GM12878 (cell line): ENCODE measurements at regions of chr12 and their contacts with region 1.

Region 1: GRCh38 chr12:56127888-56128669 is at the start of gene ESYT1:
- DNase-seq: peak; percentile 98
- ATAC-seq: peak; percentile 93
- H3K4me3 ChIP-seq: peak within 1 kb of the TSS; percentile 93
- H3K27ac ChIP-seq: peak within 1 kb of the TSS; percentile 72
- H3K4me1 ChIP-seq: peaks cover 24% of the 10 kb centered on the region
- H3K27me3 ChIP-seq: no peaks in the 10 kb centered on the region
- CTCF ChIP-seq: no peak
- EP300 ChIP-seq: peak in 1 of 2 experiments; percentile 17; a peak in 1 of 4 replicates
- POLR2A ChIP-seq: peak; percentile 87
- RAD21 ChIP-seq: no peak
- polyA plus RNA-seq, gene ESYT1: 55.6 to 57.9 TPM

Region 2: DNA sequence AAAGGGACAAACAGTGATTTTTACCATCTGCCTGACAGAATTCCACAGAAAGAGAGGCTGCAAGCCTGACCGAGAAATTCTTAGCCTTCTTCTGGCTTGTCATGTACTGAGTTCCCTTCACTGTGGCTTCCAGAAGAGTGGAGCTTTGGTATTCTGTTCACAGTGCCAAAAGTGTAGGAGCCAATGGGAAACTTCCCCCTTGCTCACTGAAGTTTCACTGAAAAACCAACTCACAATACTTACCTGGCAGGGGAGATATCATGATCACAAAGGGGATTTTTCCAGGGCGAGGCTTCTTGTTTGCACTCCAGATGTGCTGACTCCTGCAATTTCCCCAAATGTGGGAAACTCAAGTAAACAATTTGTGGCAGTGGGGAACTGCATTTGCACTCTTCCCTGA is 253.6 kb before region 1 on chr12:
- CTCF ChIA-PET with region 1: no interaction called
- POLR2A ChIA-PET with region 1: no interaction called
- RAD21 ChIA-PET with region 1: no interaction called
- SMC1A ChIA-PET with region 1: no interaction called
- in situ Hi-C with region 1: no loop called
- intact Hi-C with region 1: no loop called
- DNase-seq: no peak
- ATAC-seq: no peak
- H3K4me3 ChIP-seq: no peak overlapping the region
- H3K27ac ChIP-seq: no peak overlapping the region
- H3K4me1 ChIP-seq: no peaks in the 10 kb centered on the region
- H3K27me3 ChIP-seq: no peaks in the 10 kb centered on the region
- CTCF ChIP-seq: no peak
- EP300 ChIP-seq: no peak
- POLR2A ChIP-seq: no peak
- RAD21 ChIP-seq: no peak

Region 3: DNA sequence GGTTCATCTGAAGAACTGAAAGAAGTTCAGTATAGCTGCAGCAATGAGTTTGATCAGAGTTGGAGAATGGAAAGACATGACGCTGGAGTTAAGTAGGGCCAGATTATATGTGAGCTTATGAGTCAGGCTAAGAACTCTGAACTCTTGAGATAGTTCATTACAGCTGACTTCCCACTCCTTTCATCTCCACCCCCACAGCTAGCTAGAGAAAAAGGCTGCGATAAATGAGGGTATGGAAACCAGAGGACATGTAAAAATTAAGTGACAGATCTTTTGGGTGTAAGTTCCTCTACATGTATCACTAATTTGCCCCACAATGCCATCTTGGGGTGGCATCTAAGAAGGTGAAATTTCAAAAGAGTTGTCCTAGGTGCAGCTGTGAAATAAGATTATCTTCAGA is 229.0 kb before region 1 on chr12:
- CTCF ChIA-PET with region 1: no interaction called
- POLR2A ChIA-PET with region 1: no interaction called
- RAD21 ChIA-PET with region 1: no interaction called
- SMC1A ChIA-PET with region 1: no interaction called
- in situ Hi-C with region 1: no loop called
- intact Hi-C with region 1: no loop called
- DNase-seq: no peak
- ATAC-seq: no peak
- H3K4me3 ChIP-seq: no peak overlapping the region
- H3K27ac ChIP-seq: no peak overlapping the region
- H3K4me1 ChIP-seq: no peaks in the 10 kb centered on the region
- H3K27me3 ChIP-seq: no peaks in the 10 kb centered on the region
- CTCF ChIP-seq: no peak
- EP300 ChIP-seq: no peak
- POLR2A ChIP-seq: no peak
- RAD21 ChIP-seq: no peak

Region 4: GRCh38 chr12:56020423-56021184 is 107.5 kb before region 1 on chr12 and contains the start of gene IKZF4:
- CTCF ChIA-PET with region 1: no interaction called
- POLR2A ChIA-PET with region 1: no interaction called
- RAD21 ChIA-PET with region 1: no interaction called
- SMC1A ChIA-PET with region 1: no interaction called
- in situ Hi-C with region 1: no loop called
- intact Hi-C with region 1: no loop called
- DNase-seq: no peak
- ATAC-seq: peak; percentile 27; the same call in 2 of the 3 replicates
- H3K4me3 ChIP-seq: no peak within 1 kb of the TSS
- H3K27ac ChIP-seq: no peak within 1 kb of the TSS
- H3K4me1 ChIP-seq: peaks cover 7% of the 10 kb centered on the region
- H3K27me3 ChIP-seq: no peaks in the 10 kb centered on the region
- CTCF ChIP-seq: no peak
- EP300 ChIP-seq: no peak
- POLR2A ChIP-seq: no peak
- RAD21 ChIP-seq: no peak
- polyA plus RNA-seq, gene IKZF4: 0.74 to 1.2 TPM

Region 5: DNA sequence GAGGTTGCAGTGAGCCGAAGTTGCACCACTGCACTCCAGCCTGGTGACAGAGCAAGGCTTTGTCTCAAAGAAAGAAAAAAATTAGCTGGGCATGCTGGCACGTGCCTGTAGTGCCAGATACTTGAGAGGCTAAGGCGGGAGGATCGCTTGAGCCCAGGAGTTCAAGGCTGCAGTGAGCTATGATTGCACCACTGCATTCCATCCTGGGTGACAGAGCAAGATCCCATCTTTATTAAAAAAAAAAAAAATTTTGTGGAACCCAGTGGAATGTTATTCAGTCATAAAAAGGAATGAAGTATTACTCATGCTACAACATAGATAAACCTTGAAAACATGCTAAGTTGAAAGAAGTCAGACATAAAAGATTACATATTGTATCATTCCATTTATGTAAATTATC is 56.4 kb before region 1 on chr12:
- CTCF ChIA-PET with region 1: no interaction called
- POLR2A ChIA-PET with region 1: no interaction called
- RAD21 ChIA-PET with region 1: no interaction called
- SMC1A ChIA-PET with region 1: no interaction called
- in situ Hi-C with region 1: no loop called
- intact Hi-C with region 1: no loop called
- DNase-seq: no peak
- ATAC-seq: no peak
- H3K4me3 ChIP-seq: no peak overlapping the region
- H3K27ac ChIP-seq: no peak overlapping the region
- H3K4me1 ChIP-seq: no peaks in the 10 kb centered on the region
- H3K27me3 ChIP-seq: no peaks in the 10 kb centered on the region
- CTCF ChIP-seq: no peak
- EP300 ChIP-seq: no peak
- POLR2A ChIP-seq: no peak
- RAD21 ChIP-seq: no peak

Region 6: DNA sequence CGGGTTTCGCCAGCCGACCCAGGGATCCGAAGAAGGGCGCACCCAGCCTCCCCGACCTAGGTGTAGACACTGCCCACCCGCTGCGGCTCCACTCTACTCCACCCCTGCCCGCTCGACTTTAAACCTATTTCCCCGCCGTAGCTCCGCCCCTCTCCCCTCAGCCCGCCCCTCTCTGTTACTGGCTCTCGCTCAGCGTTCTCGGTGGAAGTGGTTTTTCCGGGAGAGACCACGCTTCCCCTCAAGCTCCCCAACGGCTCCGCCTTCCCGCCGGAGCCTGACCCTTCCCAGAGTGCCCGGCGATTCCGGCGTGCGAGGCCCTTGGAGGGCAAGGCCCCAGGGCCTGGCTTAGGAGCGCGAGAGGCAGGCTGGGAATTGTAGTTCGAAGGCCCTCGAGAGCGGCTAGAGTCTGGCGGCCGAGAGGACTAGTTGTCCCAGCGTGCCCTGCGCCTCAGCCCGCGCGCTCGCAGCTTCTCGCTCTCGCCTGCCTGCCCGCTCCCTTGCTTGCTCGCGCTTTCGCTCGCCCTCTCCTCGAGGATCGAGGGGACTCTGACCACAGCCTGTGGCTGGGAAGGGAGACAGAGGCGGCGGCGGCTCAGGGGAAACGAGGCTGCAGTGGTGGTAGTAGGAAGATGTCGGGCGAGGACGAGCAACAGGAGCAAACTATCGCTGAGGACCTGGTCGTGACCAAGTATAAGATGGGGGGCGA is 23.8 kb before region 1 on chr12 and contains the start of gene PA2G4:
- CTCF ChIA-PET with region 1: interaction called, 14 read pairs
- POLR2A ChIA-PET with region 1: interaction called, 6 read pairs
- RAD21 ChIA-PET with region 1: interaction called, 4 read pairs
- SMC1A ChIA-PET with region 1: interaction called, 8 read pairs
- in situ Hi-C with region 1: no loop called
- intact Hi-C with region 1: no loop called
- DNase-seq: peak; percentile 97
- ATAC-seq: peak; percentile 97
- H3K4me3 ChIP-seq: peak within 1 kb of the TSS; percentile 97
- H3K27ac ChIP-seq: peak within 1 kb of the TSS; percentile 86
- H3K4me1 ChIP-seq: peaks cover 3% of the 10 kb centered on the region; the same call in 1 of the 2 replicates
- H3K27me3 ChIP-seq: no peaks in the 10 kb centered on the region; a peak in 1 of 4 replicates
- CTCF ChIP-seq: no peak
- EP300 ChIP-seq: peak in 1 of 2 experiments; percentile 47; a peak in 2 of 4 replicates
- POLR2A ChIP-seq: peak; percentile 93
- RAD21 ChIP-seq: no peak
- polyA plus RNA-seq, gene PA2G4: 148 to 215 TPM

Region 7: GRCh38 chr12:56152318-56153033 is 24.4 kb after region 1 on chr12 and contains the start of gene MYL6B:
- CTCF ChIA-PET with region 1: interaction called, 11 read pairs
- POLR2A ChIA-PET with region 1: interaction called, 17 read pairs
- RAD21 ChIA-PET with region 1: interaction called, 10 read pairs
- SMC1A ChIA-PET with region 1: interaction called, 6 read pairs
- in situ Hi-C with region 1: no loop called
- intact Hi-C with region 1: loop called (anchors 1 kb)
- DNase-seq: peak; percentile 66
- ATAC-seq: peak; percentile 94
- H3K4me3 ChIP-seq: peak within 1 kb of the TSS; percentile 84
- H3K27ac ChIP-seq: peak within 1 kb of the TSS; percentile 95
- H3K4me1 ChIP-seq: peaks cover 17% of the 10 kb centered on the region
- H3K27me3 ChIP-seq: no peaks in the 10 kb centered on the region
- CTCF ChIP-seq: no peak
- EP300 ChIP-seq: no peak
- POLR2A ChIP-seq: peak; percentile 93
- RAD21 ChIP-seq: no peak
- polyA plus RNA-seq, gene MYL6B: 117 to 153 TPM

Region 8: DNA sequence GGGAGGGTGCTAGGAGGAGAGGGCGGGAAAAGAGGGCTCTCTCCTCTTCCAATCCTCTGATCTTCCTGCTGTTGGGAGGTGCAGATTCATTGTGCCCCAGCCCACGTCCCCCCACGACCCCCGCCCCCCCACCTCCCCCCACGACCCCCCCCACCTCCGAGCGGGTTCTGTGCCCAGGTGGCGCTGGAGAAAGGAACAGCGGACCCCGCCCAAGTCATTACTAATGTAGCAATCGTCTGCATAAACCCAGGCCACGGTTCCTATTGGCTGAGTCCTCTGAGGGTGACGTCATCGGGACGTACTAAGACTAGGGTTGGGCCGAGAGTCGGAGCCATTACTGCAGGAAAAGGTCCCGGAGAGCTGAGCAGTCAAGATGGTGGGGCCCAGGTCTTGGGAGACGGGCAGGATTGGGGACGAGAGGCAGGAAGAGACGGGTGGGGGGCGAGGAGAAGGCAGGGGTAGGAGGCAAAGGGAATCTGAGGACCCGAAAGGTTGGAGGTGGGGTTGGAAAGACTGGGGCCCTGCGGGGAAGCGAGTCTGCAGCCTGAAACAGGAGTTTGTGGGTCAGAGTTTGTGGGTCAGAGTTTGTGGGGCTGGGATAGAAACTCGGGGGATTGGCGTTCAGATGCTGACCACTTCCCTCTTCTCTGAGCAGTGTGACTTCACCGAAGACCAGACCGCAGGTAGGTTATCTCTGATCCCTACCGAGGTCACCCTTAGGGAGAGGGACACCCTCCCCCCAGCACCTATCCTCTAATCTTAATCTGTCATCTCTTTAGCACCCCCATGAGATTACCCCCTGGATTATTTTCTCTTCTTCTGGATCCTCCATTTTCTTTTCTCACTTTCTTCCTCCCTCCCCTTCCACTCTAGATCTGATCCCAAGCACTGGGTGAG is 30.2 kb after region 1 on chr12 and contains the start of gene MYL6:
- CTCF ChIA-PET with region 1: interaction called, 11 read pairs
- POLR2A ChIA-PET with region 1: interaction called, 19 read pairs
- RAD21 ChIA-PET with region 1: interaction called, 18 read pairs
- SMC1A ChIA-PET with region 1: interaction called, 12 read pairs
- in situ Hi-C with region 1: no loop called
- intact Hi-C with region 1: loop called (anchors 1 kb)
- DNase-seq: peak; percentile 88
- ATAC-seq: peak; percentile 87
- H3K4me3 ChIP-seq: peak within 1 kb of the TSS; percentile 90
- H3K27ac ChIP-seq: peak within 1 kb of the TSS; percentile 91
- H3K4me1 ChIP-seq: peaks cover 24% of the 10 kb centered on the region
- H3K27me3 ChIP-seq: no peaks in the 10 kb centered on the region
- CTCF ChIP-seq: no peak
- EP300 ChIP-seq: no peak
- POLR2A ChIP-seq: peak; percentile 99
- RAD21 ChIP-seq: no peak
- polyA plus RNA-seq, gene MYL6: 3,206 to 4,116 TPM

Region 9: DNA sequence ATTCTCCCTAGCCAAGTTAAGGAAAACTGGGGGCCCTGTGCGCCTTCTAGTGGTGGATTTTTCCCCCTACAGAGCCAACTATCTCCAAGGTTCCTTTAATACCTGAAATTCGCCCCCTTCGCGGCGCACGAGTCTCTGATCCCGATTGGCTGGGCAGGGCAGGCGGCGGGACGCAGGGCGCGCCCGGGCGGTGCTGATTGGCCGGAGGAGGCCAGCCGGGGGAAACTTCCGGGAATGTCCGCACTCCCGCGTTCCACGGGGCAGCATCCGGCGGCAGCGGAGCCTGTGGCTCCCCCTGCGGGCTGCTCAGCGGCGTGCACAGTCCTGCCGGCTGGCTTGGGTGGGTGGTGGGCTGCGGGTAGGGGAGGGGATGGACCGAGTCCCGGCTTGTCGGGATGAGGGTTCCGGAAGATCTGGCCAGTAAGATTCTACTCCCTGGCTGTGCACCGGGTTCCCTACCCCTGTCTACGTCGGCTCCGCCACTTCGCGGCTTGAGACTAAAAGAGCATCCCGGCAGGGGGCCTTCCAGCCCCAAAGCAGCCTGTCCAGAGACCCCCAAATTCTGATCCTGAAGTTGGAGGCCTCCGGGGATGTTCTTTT is 96.1 kb after region 1 on chr12 and contains the start of gene NABP2:
- CTCF ChIA-PET with region 1: interaction called, 14 read pairs
- POLR2A ChIA-PET with region 1: interaction called, 31 read pairs
- RAD21 ChIA-PET with region 1: interaction called, 16 read pairs
- SMC1A ChIA-PET with region 1: interaction called, 13 read pairs
- in situ Hi-C with region 1: no loop called
- intact Hi-C with region 1: loop called (anchors 1 kb)
- DNase-seq: peak; percentile 89
- ATAC-seq: peak; percentile 90
- H3K4me3 ChIP-seq: peak within 1 kb of the TSS; percentile 97
- H3K27ac ChIP-seq: peak within 1 kb of the TSS; percentile 65
- H3K4me1 ChIP-seq: 0 out of 2 replicates have a peak, but pooled peaks cover 3% of the 10 kb centered on the region
- H3K27me3 ChIP-seq: no peaks in the 10 kb centered on the region
- CTCF ChIP-seq: peak; percentile 65 to 86 (median 85)
- EP300 ChIP-seq: 0 out of 4 replicates have a peak, but pooled peaks of 1 of the 2 experiments have one; percentile 7
- POLR2A ChIP-seq: peak; percentile 78
- RAD21 ChIP-seq: peak; percentile 49; the same call in 1 of the 2 replicates
- polyA plus RNA-seq, gene NABP2: 20.7 to 29.5 TPM

Region 10: GRCh38 chr12:56258057-56258819 is 130.2 kb after region 1 on chr12 and contains the start of gene ANKRD52:
- CTCF ChIA-PET with region 1: no interaction called
- POLR2A ChIA-PET with region 1: interaction called, 4 read pairs
- RAD21 ChIA-PET with region 1: no interaction called
- SMC1A ChIA-PET with region 1: no interaction called
- in situ Hi-C with region 1: no loop called
- intact Hi-C with region 1: loop called (anchors 2 kb)
- DNase-seq: no peak
- ATAC-seq: peak; percentile 98
- H3K4me3 ChIP-seq: peak within 1 kb of the TSS; percentile 95
- H3K27ac ChIP-seq: peak within 1 kb of the TSS; percentile 73
- H3K4me1 ChIP-seq: peaks cover 7% of the 10 kb centered on the region
- H3K27me3 ChIP-seq: no peaks in the 10 kb centered on the region
- CTCF ChIP-seq: peak; percentile 54 to 84 (median 57); a peak in 5 of 6 replicates
- EP300 ChIP-seq: 0 out of 4 replicates have a peak, but pooled peaks of 1 of the 2 experiments have one; percentile 12
- POLR2A ChIP-seq: peak; percentile 71
- RAD21 ChIP-seq: no peak
- polyA plus RNA-seq, gene ANKRD52: 0.90 to 1.2 TPM

Region 11: GRCh38 chr12:56645717-56646446 is 517.8 kb after region 1 on chr12 and contains the start of gene ATP5F1B:
- CTCF ChIA-PET with region 1: no interaction called
- POLR2A ChIA-PET with region 1: no interaction called
- RAD21 ChIA-PET with region 1: no interaction called
- SMC1A ChIA-PET with region 1: no interaction called
- in situ Hi-C with region 1: no loop called
- intact Hi-C with region 1: loop called (anchors 10 kb)
- DNase-seq: peak; percentile 100
- ATAC-seq: peak; percentile 98
- H3K4me3 ChIP-seq: peak within 1 kb of the TSS; percentile 94
- H3K27ac ChIP-seq: peak within 1 kb of the TSS; percentile 89
- H3K4me1 ChIP-seq: no peaks in the 10 kb centered on the region
- H3K27me3 ChIP-seq: no peaks in the 10 kb centered on the region
- CTCF ChIP-seq: no peak
- EP300 ChIP-seq: no peak
- POLR2A ChIP-seq: peak; percentile 100
- RAD21 ChIP-seq: no peak
- polyA plus RNA-seq, gene ATP5F1B: 671 to 1,479 TPM